Adrenal gland (tissue), 19 donors: ENCODE measurements at regions of chr2 and their contacts with region 1.

Region 1: DNA sequence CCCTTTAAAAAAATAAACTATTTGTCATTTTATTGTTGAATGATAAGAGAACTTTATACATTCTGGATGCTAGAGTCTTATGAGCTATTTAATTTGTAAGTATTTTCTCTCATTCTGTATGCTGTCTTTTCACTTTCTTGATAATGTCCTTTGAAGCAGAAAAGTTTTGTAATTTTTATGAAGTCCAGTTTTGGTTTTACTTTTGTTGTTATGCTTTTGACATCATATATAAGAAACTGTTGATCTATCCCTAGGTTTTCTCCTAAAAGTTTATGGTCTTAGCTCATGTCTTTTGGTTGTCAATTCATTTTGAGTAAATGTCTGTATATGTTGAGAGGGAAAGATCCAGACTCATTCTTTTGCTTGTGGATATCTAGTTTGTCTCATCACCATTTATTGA is 52.5 kb downstream of the TMEM247 start:
- DNase-seq: no peak
- H3K4me3 ChIP-seq: no peak overlapping the region
- H3K27ac ChIP-seq: no peak overlapping the region
- H3K4me1 ChIP-seq: peaks cover 0 to 5% of the 10 kb centered on the region in 2 donors
- H3K27me3 ChIP-seq: no peaks in the 10 kb centered on the region
- CTCF ChIP-seq: no peak
- POLR2A ChIP-seq: no peak

Region 2: DNA sequence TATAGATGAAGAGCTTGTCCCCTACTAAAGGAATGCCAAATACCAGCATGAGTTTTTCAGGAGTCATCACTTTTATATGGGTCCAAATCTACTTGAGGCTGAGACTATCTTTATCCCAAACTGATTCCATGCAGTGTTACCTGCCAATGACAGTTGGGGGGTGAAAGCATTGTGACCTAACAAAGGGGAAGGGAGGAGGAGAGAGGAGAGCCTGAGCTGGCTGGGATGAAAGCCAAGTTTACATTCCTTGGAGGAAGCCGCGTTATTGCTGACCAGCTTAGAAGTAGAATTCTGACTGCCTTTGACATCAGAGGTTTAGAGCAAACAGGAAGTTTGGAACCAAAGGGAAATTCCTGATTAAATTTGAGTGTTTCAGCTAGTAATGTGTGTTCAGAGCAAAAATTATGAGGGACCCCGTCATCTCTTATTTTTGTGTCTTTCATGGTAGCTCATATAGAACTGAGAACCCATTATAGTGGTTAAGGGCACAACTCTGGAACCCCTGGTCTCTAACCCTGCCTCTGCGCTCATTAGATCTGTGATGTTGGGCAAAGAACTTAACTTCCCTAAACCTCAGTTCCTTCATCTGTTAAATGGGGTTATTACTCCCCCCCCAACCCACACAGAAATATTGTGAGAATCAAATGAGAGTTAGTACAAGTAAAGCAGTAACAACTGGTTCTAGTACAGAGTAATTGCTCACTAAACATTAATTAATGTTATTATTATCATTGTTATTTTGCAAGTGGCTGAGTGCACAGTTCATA is 434.0 kb before region 1 on chr2:
- intact Hi-C with region 1: no loop called
- DNase-seq: peak; percentile 53 to 88 (median 77)
- H3K4me3 ChIP-seq: no peak overlapping the region
- H3K27ac ChIP-seq: peak overlapping the region in 4 of 5 donors; percentile 14 to 84 (median 78)
- H3K4me1 ChIP-seq: peaks cover 0 to 12% of the 10 kb centered on the region in 2 donors
- H3K27me3 ChIP-seq: no peaks in the 10 kb centered on the region
- CTCF ChIP-seq: no peak
- POLR2A ChIP-seq: no peak

Region 3: GRCh38 chr2:46506131-46506706 is 25.6 kb before region 1 on chr2:
- intact Hi-C with region 1: loop called in 1 of 2 experiments (anchors 2 kb)
- DNase-seq: no peak
- H3K4me3 ChIP-seq: no peak overlapping the region
- H3K27ac ChIP-seq: no peak overlapping the region
- H3K4me1 ChIP-seq: no peaks in the 10 kb centered on the region
- H3K27me3 ChIP-seq: no peaks in the 10 kb centered on the region
- CTCF ChIP-seq: no peak
- POLR2A ChIP-seq: no peak